H1 (cell line): ENCODE measurements at regions of chr7 and their contacts with region 1.

Region 1: GRCh38 chr7:39623018-39623731 is at the start of gene RALA:
- DNase-seq: peak; percentile 77 to 92
- H3K4me3 ChIP-seq: peak within 1 kb of the TSS; percentile 69 to 93 (median 78)
- H3K27ac ChIP-seq: peak within 1 kb of the TSS; percentile 98
- H3K4me1 ChIP-seq: peaks cover 2 to 8% (median 5%) of the 10 kb centered on the region in 4 experiments; a peak in 6 of 7 replicates
- H3K27me3 ChIP-seq: no peaks in the 10 kb centered on the region
- CTCF ChIP-seq: no peak
- EP300 ChIP-seq: no peak
- POLR2A ChIP-seq: peak; percentile 96 to 98
- RAD21 ChIP-seq: no peak
- total RNA-seq, gene RALA: 68.5 and 72.8 TPM in 2 replicates

Region 2: GRCh38 chr7:39336442-39336841 is 286.7 kb before region 1 on chr7:
- CTCF ChIA-PET with region 1: no interaction called
- POLR2A ChIA-PET with region 1: no interaction called
- DNase-seq: no peak
- H3K4me3 ChIP-seq: no peak overlapping the region
- H3K27ac ChIP-seq: no peak overlapping the region
- H3K4me1 ChIP-seq: peaks cover 0 to 6% (median 5%) of the 10 kb centered on the region in 4 experiments; a peak in 4 of 7 replicates
- H3K27me3 ChIP-seq: no peaks in the 10 kb centered on the region; a peak in 1 of 7 replicates
- CTCF ChIP-seq: no peak
- EP300 ChIP-seq: no peak
- POLR2A ChIP-seq: no peak
- RAD21 ChIP-seq: no peak

Region 3: DNA sequence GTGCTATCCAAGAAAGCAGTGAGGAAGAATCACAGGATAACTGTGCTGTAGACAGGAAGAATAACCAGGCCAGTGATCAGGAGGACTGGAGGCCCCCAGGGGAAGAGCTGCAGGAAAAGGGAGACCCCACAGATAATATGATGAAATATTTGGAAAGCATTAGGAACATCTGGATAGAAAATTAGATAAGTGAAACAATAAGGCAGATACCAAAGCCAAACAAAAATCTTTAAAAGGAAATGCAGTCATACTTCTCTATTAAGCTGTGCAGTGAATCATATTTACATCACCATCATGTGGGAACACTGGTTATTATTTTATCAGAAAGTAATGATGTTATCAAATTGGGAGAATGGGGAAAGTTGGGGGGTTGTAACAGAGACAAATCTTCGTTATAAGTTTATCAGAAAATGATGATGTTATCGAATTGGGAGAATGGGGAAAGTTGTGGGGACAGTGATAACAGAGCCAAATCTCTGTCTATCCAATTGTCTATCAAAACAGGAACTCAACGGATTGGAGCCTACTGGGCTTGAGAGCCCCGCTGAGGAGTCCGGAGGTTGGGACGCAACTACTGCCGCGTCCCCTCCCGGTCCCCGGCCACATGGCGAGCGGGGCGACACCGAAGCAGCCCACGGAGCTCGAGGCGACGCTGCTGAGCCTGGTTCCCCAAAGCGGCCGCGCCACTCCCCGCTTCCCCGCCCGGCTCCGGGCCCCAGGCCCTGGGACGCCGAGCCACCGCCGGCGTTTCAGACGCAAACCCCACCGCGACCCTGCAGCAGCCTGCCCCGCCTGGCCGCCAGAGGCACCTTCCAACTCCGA is 13.9 kb before region 1 on chr7:
- CTCF ChIA-PET with region 1: interaction called, 11 read pairs
- POLR2A ChIA-PET with region 1: interaction called, 47 read pairs
- DNase-seq: peak in 1 of 2 experiments; percentile 76
- H3K4me3 ChIP-seq: peak overlapping the region; percentile 34 to 57 (median 47); a peak in 6 of 8 replicates
- H3K27ac ChIP-seq: no peak overlapping the region
- H3K4me1 ChIP-seq: peaks cover 0 to 4% (median 2%) of the 10 kb centered on the region in 4 experiments; a peak in 4 of 7 replicates
- H3K27me3 ChIP-seq: peaks cover 0 to 10% (median 6%) of the 10 kb centered on the region in 4 experiments; a peak in 4 of 7 replicates
- CTCF ChIP-seq: peak; percentile 40 to 50 (median 46)
- EP300 ChIP-seq: no peak
- POLR2A ChIP-seq: no peak
- RAD21 ChIP-seq: peak; percentile 6 to 39; a peak in 2 of 4 replicates

Region 4: GRCh38 chr7:39732837-39733804 is 109.9 kb after region 1 on chr7:
- CTCF ChIA-PET with region 1: interaction called, 3 read pairs
- POLR2A ChIA-PET with region 1: interaction called, 12 read pairs
- DNase-seq: peak; percentile 94 to 99
- H3K4me3 ChIP-seq: peak overlapping the region; percentile 34 to 65 (median 58)
- H3K27ac ChIP-seq: peak overlapping the region; percentile 75
- H3K4me1 ChIP-seq: peaks cover 6 to 13% (median 7%) of the 10 kb centered on the region in 4 experiments
- H3K27me3 ChIP-seq: peaks cover 0 to 15% (median 6%) of the 10 kb centered on the region in 4 experiments; a peak in 3 of 7 replicates
- CTCF ChIP-seq: no peak
- EP300 ChIP-seq: no peak
- POLR2A ChIP-seq: peak in 1 of 2 experiments; percentile 61
- RAD21 ChIP-seq: 0 out of 4 replicates have a peak, but pooled peaks of 1 of the 2 experiments have one; percentile 11